ENCODE measurements at regions of chr5 and their contacts with region 1.

Region 1: GRCh38 chr5:14270209-14270702 is 127.1 kb downstream of the TRIO start:
- DNase-seq: peak; percentile 48 to 80
- ATAC-seq: peak; percentile 83 to 95 (median 90)
- H3K4me3 ChIP-seq: no peak overlapping the region
- H3K27ac ChIP-seq: peak overlapping the region; percentile 86
- H3K4me1 ChIP-seq: peaks cover 55% of the 10 kb centered on the region
- H3K27me3 ChIP-seq: no peaks in the 10 kb centered on the region
- CTCF ChIP-seq: peak; percentile 85

Region 2: GRCh38 chr5:14035859-14036440 is 234.3 kb before region 1 on chr5:
- intact Hi-C with region 1: loop called in 1 of 2 experiments (anchors 2 kb)
- DNase-seq: no peak
- ATAC-seq: peak; percentile 78 to 94 (median 86)
- H3K4me3 ChIP-seq: peak overlapping the region; percentile 26
- H3K27ac ChIP-seq: peak overlapping the region; percentile 89
- H3K4me1 ChIP-seq: peaks cover 39% of the 10 kb centered on the region
- H3K27me3 ChIP-seq: no peaks in the 10 kb centered on the region
- CTCF ChIP-seq: no peak

Region 3: GRCh38 chr5:14108170-14108996 is 161.9 kb before region 1 on chr5:
- intact Hi-C with region 1: loop called (anchors 2 kb)
- DNase-seq: peak; percentile 29 to 62
- ATAC-seq: peak; percentile 85 to 98 (median 90)
- H3K4me3 ChIP-seq: peak overlapping the region; percentile 42
- H3K27ac ChIP-seq: no peak overlapping the region
- H3K4me1 ChIP-seq: no peaks in the 10 kb centered on the region
- H3K27me3 ChIP-seq: no peaks in the 10 kb centered on the region
- CTCF ChIP-seq: peak; percentile 75